CD8-positive, alpha-beta T cell (primary cell): ENCODE measurements at regions of chr9 and their contacts with region 1.

Region 1: DNA sequence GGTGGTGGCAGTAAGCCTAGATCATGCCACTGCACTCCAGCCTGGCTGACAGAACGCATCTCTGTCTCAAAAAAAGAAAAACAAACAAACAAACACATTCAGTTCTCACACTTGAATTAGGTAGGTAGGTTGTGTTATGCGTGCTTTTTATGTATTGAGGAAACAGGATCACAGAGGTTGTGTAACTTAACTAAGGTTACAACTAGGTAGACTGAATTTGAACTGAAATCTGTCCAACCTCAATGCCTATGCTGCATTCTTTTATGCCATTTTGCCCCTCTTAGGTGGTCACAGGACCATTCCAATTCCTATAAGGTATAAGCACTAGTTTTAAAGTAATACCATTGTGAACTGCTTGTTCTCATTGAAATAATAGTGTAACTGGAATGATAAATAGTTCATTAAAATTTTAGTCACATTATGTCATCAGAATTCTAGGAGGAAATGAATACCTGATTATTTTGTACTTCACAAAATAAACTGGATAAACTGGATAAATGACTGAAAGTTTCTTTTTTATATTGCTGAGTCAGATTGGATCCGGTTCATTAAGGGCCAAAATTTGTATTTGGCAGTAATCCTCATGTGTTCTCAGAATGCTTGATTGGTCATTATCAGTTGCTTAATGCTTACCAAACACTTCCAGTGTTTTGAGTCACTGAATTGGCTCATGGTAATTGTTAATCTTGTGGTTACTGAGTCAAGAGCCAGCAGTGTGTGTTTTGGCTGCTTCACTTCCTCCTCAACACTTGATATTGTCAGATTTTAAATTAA is 7.1 kb downstream of the UBAP1 start:
- DNase-seq: peak in 4 of 9 experiments; percentile 23 to 65 (median 48)
- ATAC-seq: peak; percentile 90
- H3K4me3 ChIP-seq: no peak overlapping the region
- H3K4me3 Mint-ChIP-seq: no peak overlapping the region
- H3K27ac ChIP-seq: no peak overlapping the region
- H3K27ac Mint-ChIP-seq: peak overlapping the region; percentile 27
- H3K4me1 ChIP-seq: peaks cover 16% of the 10 kb centered on the region
- H3K4me1 Mint-ChIP-seq: peaks cover 39% of the 10 kb centered on the region
- H3K27me3 ChIP-seq: no peaks in the 10 kb centered on the region
- H3K27me3 Mint-ChIP-seq: no peaks in the 10 kb centered on the region
- CTCF ChIP-seq: no peak

Region 2: DNA sequence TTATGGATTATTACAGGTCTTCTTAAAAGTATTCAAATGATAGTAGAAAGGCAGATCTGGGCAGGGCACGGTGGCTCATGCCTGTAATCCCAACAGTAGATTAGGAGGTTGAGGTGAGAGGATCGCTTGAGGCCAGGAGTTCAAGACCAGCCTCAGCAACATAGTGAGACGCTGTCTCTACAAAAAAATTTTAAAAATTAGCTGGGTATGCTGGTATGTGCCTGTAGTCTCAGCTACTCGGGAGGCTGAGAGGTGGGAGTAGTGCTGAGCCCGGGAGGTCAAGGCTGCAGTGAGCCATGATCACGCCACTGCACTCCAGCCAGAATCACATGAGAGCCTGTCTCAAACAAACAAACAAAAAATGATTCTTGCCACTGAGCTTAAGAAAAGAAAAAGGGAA is 36.5 kb after region 1 on chr9:
- CTCF ChIA-PET with region 1: interaction called, 5 read pairs
- POLR2A ChIA-PET with region 1: no interaction called
- intact Hi-C with region 1: loop called in 1 of 2 experiments (anchors 5 kb)
- DNase-seq: no peak
- ATAC-seq: no peak
- H3K4me3 ChIP-seq: no peak overlapping the region
- H3K4me3 Mint-ChIP-seq: no peak overlapping the region
- H3K27ac ChIP-seq: no peak overlapping the region
- H3K27ac Mint-ChIP-seq: no peak overlapping the region
- H3K4me1 ChIP-seq: peaks cover 3% of the 10 kb centered on the region
- H3K4me1 Mint-ChIP-seq: peaks cover 23% of the 10 kb centered on the region
- H3K27me3 ChIP-seq: no peaks in the 10 kb centered on the region
- H3K27me3 Mint-ChIP-seq: no peaks in the 10 kb centered on the region
- CTCF ChIP-seq: no peak

Region 3: DNA sequence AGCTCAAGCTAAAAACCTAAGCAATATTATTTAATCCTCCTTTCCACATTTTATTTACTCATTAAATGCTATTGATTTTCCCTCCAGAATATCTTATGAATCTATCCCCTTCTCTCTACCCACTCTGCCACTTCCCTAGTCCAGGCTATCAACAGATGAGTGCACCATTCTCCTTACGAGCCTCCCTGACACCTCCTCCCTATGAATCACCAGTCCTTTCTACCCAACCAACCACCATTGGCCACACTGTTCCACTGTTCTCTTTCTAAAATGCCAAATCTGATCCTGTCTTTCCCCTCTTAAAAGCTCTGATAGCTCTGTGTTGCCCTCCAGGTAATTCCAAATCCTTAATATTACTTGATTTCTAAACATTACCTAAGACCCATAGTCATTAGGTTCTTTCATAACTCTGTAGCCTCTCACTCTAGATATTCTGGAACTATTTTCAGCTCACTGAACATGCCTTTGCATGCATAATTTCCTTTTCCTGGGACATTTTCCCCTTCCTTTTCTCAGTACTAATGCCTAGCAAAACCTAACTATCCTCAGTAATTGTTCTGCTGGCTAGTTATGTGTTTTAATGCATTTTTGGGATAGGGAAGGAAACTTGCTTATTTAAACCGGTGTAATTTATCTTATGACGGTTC is 1102.1 kb after region 1 on chr9:
- CTCF ChIA-PET with region 1: no interaction called
- POLR2A ChIA-PET with region 1: no interaction called
- intact Hi-C with region 1: no loop called
- DNase-seq: no peak
- ATAC-seq: no peak
- H3K4me3 ChIP-seq: no peak overlapping the region
- H3K4me3 Mint-ChIP-seq: no peak overlapping the region
- H3K27ac ChIP-seq: no peak overlapping the region
- H3K27ac Mint-ChIP-seq: no peak overlapping the region
- H3K4me1 ChIP-seq: no peaks in the 10 kb centered on the region
- H3K4me1 Mint-ChIP-seq: no peaks in the 10 kb centered on the region
- H3K27me3 ChIP-seq: peaks cover 0 to 2% of the 10 kb centered on the region in 2 experiments
- H3K27me3 Mint-ChIP-seq: peaks cover 20% of the 10 kb centered on the region
- CTCF ChIP-seq: no peak

Region 4: DNA sequence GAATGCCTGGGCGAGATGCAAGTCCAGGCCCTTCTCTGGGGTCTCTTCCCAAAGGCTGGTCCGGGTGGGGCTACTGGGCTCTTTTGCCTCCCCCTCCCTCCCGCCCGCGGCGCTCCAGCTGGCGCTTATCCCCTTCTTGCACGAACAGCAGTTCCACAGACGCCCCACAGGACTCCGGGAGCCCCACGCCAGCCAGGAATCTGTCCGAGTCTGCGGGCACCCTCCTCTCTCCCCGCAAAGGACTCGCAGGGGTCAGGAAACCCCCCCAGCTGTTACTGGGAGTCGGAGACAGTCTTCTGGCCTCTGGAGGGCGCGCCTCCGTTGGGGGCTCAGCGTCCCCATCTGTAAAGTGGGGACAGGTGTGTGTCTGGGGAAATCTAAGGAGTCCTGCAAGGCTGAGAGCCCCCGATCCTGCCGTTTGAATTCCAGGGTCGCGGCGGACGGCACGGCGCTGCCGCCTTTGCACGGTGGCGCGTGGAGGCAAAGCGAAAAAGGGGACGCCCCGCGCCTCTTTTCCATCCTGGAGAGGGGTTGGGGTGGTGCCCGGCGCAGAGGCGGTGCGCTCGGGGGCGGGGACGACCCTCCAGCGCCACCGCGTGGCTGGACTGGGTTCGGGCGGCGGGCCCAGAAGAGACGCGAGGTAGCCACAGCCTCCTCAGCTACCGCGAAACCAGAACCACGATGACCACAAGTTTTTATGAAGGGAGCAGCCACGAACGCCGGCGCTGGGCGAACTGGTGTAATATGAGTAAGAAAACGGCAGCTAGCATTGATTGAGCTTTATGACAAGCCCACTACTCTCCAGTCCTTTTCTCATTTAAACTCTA is 1980.3 kb after region 1 on chr9:
- CTCF ChIA-PET with region 1: no interaction called
- POLR2A ChIA-PET with region 1: no interaction called
- intact Hi-C with region 1: no loop called
- DNase-seq: peak; percentile 64 to 92 (median 81)
- ATAC-seq: peak; percentile 98
- H3K4me3 ChIP-seq: peak overlapping the region; percentile 34 to 53
- H3K4me3 Mint-ChIP-seq: peak overlapping the region; percentile 70
- H3K27ac ChIP-seq: no peak overlapping the region
- H3K27ac Mint-ChIP-seq: no peak overlapping the region
- H3K4me1 ChIP-seq: peaks cover 7% of the 10 kb centered on the region
- H3K4me1 Mint-ChIP-seq: peaks cover 10% of the 10 kb centered on the region
- H3K27me3 ChIP-seq: no peaks in the 10 kb centered on the region
- H3K27me3 Mint-ChIP-seq: no peaks in the 10 kb centered on the region
- CTCF ChIP-seq: peak; percentile 83